Panc1 (cell line): ENCODE measurements at regions of chr9 and their contacts with region 1.

Region 1: GRCh38 chr9:96619491-96620154 is at the start of gene CDC14B:
- DNase-seq: peak; percentile 64
- ATAC-seq: peak; percentile 90
- H3K4me3 ChIP-seq: peak within 1 kb of the TSS; percentile 57 to 66
- H3K27ac ChIP-seq: peak within 1 kb of the TSS; percentile 80
- H3K4me1 ChIP-seq: peaks cover 21% of the 10 kb centered on the region
- H3K27me3 ChIP-seq: no peaks in the 10 kb centered on the region
- CTCF ChIP-seq: peak; percentile 68
- total RNA-seq, gene CDC14B: 11.8 TPM

Region 2: DNA sequence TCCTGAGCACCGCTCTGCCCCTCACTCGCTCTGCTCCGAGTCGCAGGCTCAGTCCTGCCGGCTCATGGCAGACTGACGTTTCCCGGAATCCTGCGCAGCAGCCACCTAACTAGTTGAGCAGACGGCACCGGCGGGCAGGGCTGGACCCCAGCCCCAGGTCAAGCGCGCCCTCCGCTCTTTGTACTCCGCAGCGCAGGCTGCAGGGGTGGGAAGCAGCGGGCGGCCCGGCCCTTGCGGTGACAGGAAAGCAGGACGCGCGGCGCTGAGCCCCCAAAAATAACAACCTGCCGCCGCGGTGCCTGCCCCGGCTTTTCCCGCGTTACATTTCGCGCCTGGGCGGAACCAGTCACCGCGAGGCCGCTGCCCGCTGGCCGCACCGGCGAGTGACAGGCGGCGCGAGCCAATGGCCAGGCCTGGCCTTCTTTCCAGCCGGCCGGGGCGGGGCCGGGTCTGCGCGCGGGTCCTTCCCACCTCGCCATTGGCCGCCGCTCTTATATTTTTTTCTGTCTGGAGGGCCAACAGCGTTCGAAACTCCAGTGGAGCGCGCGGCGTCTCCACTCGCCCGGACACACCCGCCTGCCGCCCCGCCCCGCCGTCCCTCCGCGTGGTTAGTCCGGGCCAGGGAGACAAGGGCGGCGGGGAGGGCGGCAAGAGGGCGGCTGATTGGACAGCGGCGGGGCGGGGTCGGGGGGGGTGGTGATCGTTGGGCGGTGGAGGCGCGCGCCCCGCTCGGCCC is 201.4 kb before region 1 on chr9 and contains the start of gene ZNF367:
- CTCF ChIA-PET with region 1: no interaction called
- POLR2A ChIA-PET with region 1: no interaction called
- in situ Hi-C with region 1: no loop called
- intact Hi-C with region 1: no loop called
- DNase-seq: peak; percentile 57
- ATAC-seq: peak; percentile 85
- H3K4me3 ChIP-seq: peak within 1 kb of the TSS; percentile 82 to 84
- H3K27ac ChIP-seq: peak within 1 kb of the TSS; percentile 99
- H3K4me1 ChIP-seq: peaks cover 25% of the 10 kb centered on the region
- H3K27me3 ChIP-seq: no peaks in the 10 kb centered on the region
- CTCF ChIP-seq: no peak
- total RNA-seq, gene ZNF367: 12.4 TPM

Region 3: GRCh38 chr9:96495341-96495740 is 124.3 kb before region 1 on chr9:
- CTCF ChIA-PET with region 1: interaction called, 13 read pairs
- POLR2A ChIA-PET with region 1: no interaction called
- in situ Hi-C with region 1: no loop called
- intact Hi-C with region 1: no loop called
- DNase-seq: no peak
- ATAC-seq: no peak
- H3K4me3 ChIP-seq: no peak overlapping the region
- H3K27ac ChIP-seq: no peak overlapping the region
- H3K4me1 ChIP-seq: no peaks in the 10 kb centered on the region
- H3K27me3 ChIP-seq: no peaks in the 10 kb centered on the region
- CTCF ChIP-seq: no peak